Posterior vena cava (tissue), 2 donors: ENCODE measurements at regions of chr18 and their contacts with region 1.

Region 1: GRCh38 chr18:29418136-29418535 is 1241.2 kb upstream of the CDH2 start:
- DNase-seq: no peak

Region 2: DNA sequence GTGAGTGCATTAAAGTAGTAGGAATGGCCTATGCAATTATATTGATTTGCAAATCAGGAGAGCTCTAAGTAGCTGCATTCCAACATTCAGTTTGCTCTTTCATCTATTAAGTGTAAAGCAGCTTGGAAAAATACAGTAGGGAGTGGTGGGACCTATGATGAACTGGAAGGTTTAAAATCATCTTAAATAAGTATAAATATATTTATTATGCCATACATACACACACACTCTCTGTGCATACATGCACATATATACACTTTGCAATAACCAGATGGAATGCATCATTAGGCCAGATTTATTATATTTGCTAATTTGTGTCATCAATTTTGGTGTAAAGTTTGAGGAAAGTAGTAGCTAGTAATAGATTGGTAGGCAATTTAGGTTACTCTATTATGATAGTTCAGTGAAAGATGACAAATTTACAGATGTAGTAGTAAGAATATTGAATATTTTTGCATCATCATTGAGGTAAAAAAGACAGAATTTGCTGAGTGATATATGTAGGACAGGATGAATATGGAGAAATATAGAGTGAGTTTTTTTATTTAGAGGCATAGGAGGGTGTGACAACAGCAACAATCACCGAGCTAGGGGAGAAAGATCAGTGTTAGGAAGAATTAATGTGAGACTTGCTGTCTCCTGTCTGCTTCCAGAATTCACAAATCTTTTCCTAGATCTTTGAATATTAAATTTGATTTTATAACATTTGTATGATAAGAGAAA is 280.2 kb before region 1 on chr18:
- intact Hi-C with region 1: no loop called
- DNase-seq: no peak

Region 3: DNA sequence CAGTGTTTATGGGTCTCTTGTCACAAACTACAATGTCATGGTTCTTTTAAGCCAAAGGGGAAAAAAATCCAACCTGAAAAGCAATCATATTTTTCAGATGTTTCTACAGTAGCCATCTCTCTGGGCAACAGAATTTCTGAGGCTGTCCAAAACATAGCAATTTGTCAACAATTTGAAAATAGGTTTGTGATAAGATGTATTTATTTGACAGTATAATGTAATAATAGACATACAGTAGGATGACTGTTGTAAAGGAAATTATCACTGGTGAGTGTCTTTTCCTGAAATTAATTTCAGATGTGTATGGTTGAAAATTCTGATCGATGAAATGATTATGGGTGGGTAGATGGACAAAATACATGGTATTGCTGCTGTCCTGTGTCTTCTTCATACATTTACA is 11.1 kb before region 1 on chr18:
- intact Hi-C with region 1: loop called in 1 of 2 experiments (anchors 1 kb)
- DNase-seq: no peak